Uterus (tissue), 4 donors: ENCODE measurements at regions of chr10 and their contacts with region 1.

Region 1: DNA sequence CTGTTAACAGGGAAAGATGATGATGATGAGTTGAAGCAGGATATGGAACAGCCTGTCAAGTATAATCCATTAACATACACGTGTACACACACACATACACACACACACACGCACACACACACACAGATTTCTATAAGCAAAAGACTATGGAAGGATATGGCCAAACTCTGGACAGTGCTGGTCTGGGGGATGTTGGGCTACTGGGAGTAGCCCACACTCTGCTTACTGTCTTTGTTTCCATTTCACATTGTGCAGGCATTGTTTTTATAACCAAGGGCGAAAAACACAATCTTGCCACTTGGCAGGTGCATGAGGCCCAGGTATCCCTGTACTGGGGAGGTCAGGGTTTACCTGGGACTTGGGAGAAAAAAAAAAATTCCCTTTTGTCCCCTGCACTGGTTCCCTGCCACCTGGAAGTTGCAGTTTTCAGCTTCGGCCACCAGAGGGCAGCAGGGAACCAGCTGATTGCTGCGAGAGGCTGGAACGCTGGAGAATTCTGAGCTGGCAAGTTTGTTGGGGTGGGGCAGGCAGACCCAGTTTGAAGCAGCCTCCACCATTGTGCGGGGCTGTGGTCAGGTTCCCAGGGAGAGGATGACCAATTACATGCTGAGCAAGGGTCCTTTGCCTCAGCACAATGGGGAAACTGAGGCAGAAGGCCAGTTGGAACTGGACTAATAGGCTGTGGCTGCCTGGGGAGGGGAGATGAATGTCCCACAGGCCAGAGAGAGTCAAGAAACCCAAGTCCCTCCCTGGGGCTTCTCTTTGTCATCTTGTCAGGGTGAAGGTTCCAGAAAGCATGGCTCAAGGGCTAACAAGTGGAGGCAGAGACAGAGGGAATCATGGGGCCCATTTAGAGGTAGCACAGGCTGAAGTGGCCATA is 27.3 kb downstream of the PPIF start:
- DNase-seq: peak; percentile 82 to 84
- H3K4me3 ChIP-seq: no peak overlapping the region
- H3K27ac ChIP-seq: no peak overlapping the region
- H3K4me1 ChIP-seq: peaks cover 1 to 4% of the 10 kb centered on the region in 2 donors
- H3K27me3 ChIP-seq: no peaks in the 10 kb centered on the region
- CTCF ChIP-seq: peak; percentile 97 to 98 (median 97)
- POLR2A ChIP-seq: no peak

Region 2: DNA sequence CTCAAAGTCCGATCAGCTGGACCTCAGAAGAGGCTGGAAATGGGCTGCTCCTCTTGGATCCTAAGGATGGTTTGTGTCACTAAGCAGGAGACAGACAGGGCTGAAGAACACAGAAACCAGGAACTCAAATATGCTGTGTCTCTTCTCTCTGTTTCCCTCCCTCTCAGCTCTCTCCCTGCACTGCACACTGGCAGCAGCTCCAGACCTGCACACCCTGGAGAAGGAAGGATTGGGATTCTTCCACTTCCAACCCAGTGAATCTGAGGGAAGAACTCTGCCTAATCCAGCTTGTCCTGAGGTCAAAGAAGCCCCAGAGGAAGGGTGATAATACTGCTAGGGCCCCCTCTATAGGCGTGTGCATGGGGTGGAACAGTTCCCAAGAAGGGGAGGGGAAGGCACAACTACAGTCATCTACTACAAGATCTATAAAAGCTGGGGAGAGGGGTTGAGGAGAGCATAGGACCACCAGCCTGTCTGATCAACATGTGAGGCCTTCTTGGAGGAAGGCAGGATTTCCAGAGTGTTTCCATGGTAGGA is 93.5 kb after region 1 on chr10:
- intact Hi-C with region 1: loop called (anchors 5 kb)
- DNase-seq: no peak
- H3K4me3 ChIP-seq: no peak overlapping the region
- H3K27ac ChIP-seq: peak overlapping the region; percentile 12 to 22
- H3K4me1 ChIP-seq: no peaks in the 10 kb centered on the region
- H3K27me3 ChIP-seq: no peaks in the 10 kb centered on the region
- CTCF ChIP-seq: no peak
- POLR2A ChIP-seq: no peak

Region 3: GRCh38 chr10:79490400-79491142 is 116.0 kb after region 1 on chr10:
- intact Hi-C with region 1: loop called (anchors 10 kb)
- DNase-seq: peak; percentile 65 to 71
- H3K4me3 ChIP-seq: no peak overlapping the region
- H3K27ac ChIP-seq: peak overlapping the region; percentile 70 to 80
- H3K4me1 ChIP-seq: peaks cover 0 to 6% of the 10 kb centered on the region in 2 donors
- H3K27me3 ChIP-seq: no peaks in the 10 kb centered on the region
- CTCF ChIP-seq: no peak
- POLR2A ChIP-seq: no peak

Region 4: DNA sequence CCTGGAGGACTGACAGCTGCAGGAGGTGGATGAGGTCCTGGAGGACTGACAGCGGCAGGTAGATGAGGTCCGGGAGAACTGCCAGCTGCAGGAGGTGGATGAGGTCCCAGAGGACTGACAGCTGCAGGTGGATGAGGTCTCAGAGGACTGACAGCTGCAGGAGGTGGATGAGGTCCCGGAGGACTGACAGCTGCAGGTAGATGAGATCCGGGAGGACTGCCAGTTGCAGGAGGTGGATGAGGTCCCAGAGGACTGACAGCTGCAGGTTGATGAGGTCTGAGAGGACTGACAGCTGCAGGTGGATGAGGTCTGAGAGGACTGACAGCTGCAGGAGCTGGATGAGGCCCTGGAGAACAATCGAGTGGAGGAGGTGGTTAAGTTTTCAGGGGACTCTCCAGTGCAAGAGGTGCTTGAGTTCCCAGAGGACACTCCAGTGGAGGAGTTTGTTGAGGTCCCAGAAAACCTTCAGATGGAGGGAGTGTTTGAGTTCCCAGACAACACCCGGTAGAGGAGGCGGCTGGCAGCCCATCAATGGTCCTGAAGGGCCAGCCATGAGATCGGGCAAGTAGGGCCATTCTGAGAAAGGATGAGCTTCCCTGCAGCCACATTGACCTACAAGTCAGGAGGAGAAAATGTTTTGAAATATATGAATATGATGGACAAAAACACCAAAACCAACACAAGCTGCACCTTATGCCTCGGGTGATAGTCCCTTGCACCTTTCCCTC is 133.1 kb after region 1 on chr10:
- intact Hi-C with region 1: no loop called
- DNase-seq: no peak
- H3K4me3 ChIP-seq: no peak overlapping the region
- H3K27ac ChIP-seq: no peak overlapping the region
- H3K4me1 ChIP-seq: no peaks in the 10 kb centered on the region
- H3K27me3 ChIP-seq: no peaks in the 10 kb centered on the region
- CTCF ChIP-seq: no peak
- POLR2A ChIP-seq: no peak

Region 5: DNA sequence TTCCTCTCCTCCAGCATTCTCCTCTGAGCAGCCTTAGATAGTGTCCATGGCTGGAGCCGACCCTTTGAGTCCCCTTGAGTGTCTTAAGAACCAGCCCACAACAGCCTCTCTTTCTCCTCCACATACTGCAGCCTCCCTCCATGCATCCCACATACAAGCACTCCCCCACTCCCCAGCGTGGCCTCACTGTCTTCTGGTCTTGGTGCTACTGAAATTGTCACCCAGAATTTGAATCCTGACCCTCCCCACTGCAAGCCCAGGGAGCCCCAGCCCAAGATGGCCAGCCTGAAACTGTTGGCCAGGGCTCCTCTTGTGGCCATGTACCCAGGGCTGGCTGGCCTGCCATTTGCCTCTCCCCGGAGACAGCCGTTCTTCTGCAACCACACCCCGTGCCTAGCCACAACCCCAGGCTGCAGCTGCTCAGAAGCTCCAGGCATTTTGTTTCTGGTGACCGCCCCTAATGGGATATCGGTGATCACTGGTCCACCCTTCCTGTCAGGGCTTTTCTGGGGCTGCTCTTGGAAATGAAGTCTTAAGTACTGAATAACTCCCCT is 1144.3 kb after region 1 on chr10:
- intact Hi-C with region 1: no loop called
- DNase-seq: no peak
- H3K4me3 ChIP-seq: no peak overlapping the region
- H3K27ac ChIP-seq: no peak overlapping the region
- H3K4me1 ChIP-seq: no peaks in the 10 kb centered on the region
- H3K27me3 ChIP-seq: no peaks in the 10 kb centered on the region
- CTCF ChIP-seq: no peak
- POLR2A ChIP-seq: no peak